Activated B cell treated with CpG ODN at 0.5 μM for 24 hours (primary cell): ENCODE measurements at regions of chr4 and their contacts with region 1.

Region 1: DNA sequence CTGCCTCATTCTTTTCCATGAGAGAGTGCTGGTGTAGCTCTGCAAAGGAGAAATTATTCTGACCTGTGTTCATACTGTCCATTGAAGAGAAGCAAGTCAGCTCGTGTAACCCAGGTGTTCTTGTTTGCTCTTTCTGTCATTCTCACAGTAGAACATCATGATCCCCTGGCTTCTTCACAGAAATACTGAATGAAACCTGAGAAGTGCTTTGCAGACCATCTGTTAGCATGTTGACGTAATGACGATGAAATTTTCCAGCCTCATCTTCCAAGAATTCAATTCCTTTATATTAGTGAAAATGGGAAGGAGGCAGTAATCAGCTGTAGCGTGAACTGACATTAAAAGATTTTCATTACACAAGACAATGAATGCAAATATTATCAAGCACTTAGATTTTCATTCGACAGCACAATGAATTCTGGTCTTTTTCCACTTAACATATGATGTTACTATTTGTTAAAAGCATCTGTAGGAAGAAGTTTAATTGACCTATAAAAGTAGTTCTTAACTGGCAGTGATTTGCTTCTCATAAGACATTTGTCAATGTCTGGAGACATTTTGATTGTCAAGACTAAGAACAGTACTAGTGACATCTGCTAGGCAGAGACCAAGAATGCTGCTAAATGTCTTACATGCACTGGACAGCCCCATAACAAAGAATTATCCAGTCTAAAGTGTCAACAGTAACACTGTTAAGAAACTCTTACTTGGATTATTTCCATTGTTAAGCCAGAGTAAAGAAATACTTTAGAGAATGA is 246.3 kb downstream of the BANK1 start:
- DNase-seq: no peak
- ATAC-seq: no peak
- H3K4me3 Mint-ChIP-seq: no peak overlapping the region
- H3K27ac Mint-ChIP-seq: peak overlapping the region; percentile 50
- H3K4me1 Mint-ChIP-seq: peaks cover 29% of the 10 kb centered on the region
- H3K27me3 Mint-ChIP-seq: no peaks in the 10 kb centered on the region
- CTCF ChIP-seq: no peak

Region 2: DNA sequence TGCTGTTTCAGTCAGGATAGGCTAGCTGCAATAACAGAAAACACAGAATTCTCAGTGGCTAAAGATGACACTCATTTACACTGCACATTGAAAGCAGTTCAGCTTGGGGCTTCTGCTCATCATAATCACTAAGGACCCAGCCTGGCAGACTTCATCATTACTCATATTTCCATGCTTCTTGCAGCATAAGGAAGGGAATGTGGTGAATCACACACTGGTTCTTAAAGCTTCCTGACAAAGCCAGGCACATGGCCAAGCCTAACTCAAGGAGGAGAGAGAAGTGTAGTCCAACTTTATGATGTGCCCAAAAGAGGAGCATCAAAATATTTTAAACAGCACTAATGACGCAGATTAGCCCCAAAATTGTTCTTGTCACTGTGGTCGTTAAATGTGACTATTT is 59.7 kb before region 1 on chr4:
- CTCF ChIA-PET with region 1: no interaction called
- POLR2A ChIA-PET with region 1: no interaction called
- intact Hi-C with region 1: no loop called
- DNase-seq: no peak
- ATAC-seq: no peak
- H3K4me3 Mint-ChIP-seq: no peak overlapping the region
- H3K27ac Mint-ChIP-seq: peak overlapping the region; percentile 57
- H3K4me1 Mint-ChIP-seq: peaks cover 66% of the 10 kb centered on the region
- H3K27me3 Mint-ChIP-seq: no peaks in the 10 kb centered on the region
- CTCF ChIP-seq: no peak

Region 3: GRCh38 chr4:102022343-102022742 is 14.5 kb before region 1 on chr4:
- CTCF ChIA-PET with region 1: no interaction called
- POLR2A ChIA-PET with region 1: interaction called, 3 read pairs
- intact Hi-C with region 1: loop called (anchors 2 kb)
- DNase-seq: no peak
- ATAC-seq: no peak
- H3K4me3 Mint-ChIP-seq: no peak overlapping the region
- H3K27ac Mint-ChIP-seq: peak overlapping the region; percentile 6
- H3K4me1 Mint-ChIP-seq: peaks cover 1% of the 10 kb centered on the region
- H3K27me3 Mint-ChIP-seq: no peaks in the 10 kb centered on the region
- CTCF ChIP-seq: no peak

Region 4: GRCh38 chr4:102055805-102056204 is 19.0 kb after region 1 on chr4:
- CTCF ChIA-PET with region 1: no interaction called
- POLR2A ChIA-PET with region 1: interaction called, 3 read pairs
- intact Hi-C with region 1: loop called (anchors 1 kb)
- DNase-seq: no peak
- ATAC-seq: no peak
- H3K4me3 Mint-ChIP-seq: no peak overlapping the region
- H3K27ac Mint-ChIP-seq: no peak overlapping the region
- H3K4me1 Mint-ChIP-seq: peaks cover 18% of the 10 kb centered on the region
- H3K27me3 Mint-ChIP-seq: no peaks in the 10 kb centered on the region
- CTCF ChIP-seq: no peak

Region 5: DNA sequence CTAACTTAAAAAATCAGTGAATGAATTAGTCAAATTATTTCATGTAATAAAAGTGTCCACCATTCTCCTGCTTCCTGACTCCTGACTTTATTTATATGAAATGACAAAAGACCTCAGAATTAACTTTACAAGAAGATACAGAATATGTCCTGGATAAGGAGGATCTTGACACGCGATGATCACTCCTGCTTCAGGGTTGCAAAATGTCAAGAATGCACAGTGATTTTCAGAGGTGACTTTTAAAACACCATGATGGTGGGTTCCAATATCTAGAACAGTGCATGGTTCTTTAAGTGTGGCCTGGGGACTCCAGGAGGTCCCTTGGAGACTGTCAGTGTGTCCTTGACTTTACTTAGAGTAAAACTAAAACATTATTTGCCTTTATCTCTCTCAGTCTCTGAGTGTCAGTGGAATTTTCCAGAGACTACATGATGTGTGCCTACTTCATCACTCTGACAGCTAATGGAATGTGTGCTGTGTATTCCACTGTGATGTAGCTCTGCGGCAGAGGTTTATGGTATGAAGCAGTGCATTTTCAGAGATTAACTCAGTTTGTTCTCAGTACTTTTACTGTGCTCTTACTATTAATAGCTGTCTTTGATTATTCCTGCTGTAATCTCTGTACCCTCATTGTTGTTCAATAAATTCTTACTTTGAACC is 638.2 kb after region 1 on chr4:
- CTCF ChIA-PET with region 1: no interaction called
- POLR2A ChIA-PET with region 1: no interaction called
- intact Hi-C with region 1: no loop called
- DNase-seq: no peak
- ATAC-seq: no peak
- H3K4me3 Mint-ChIP-seq: no peak overlapping the region
- H3K27ac Mint-ChIP-seq: no peak overlapping the region
- H3K4me1 Mint-ChIP-seq: no peaks in the 10 kb centered on the region
- H3K27me3 Mint-ChIP-seq: no peaks in the 10 kb centered on the region
- CTCF ChIP-seq: no peak